SK-N-SH (cell line): ENCODE measurements at regions of chr17 and their contacts with region 1.

Region 1: GRCh38 chr17:76384222-76384986 is at the start of gene SPHK1:
- DNase-seq: peak; percentile 91
- H3K4me3 ChIP-seq: peak within 1 kb of the TSS; percentile 53 to 78
- H3K27ac ChIP-seq: peak within 1 kb of the TSS in 1 of 2 experiments; percentile 80; a peak in 2 of 4 replicates
- H3K4me1 ChIP-seq: peaks cover 0 to 40% of the 10 kb centered on the region in 2 experiments; a peak in 1 of 4 replicates
- H3K27me3 ChIP-seq: no peaks in the 10 kb centered on the region
- CTCF ChIP-seq: no peak
- EP300 ChIP-seq: no peak
- RAD21 ChIP-seq: no peak
- polyA plus RNA-seq, gene SPHK1: 7.7 and 12.3 TPM in 2 replicates

Region 2: DNA sequence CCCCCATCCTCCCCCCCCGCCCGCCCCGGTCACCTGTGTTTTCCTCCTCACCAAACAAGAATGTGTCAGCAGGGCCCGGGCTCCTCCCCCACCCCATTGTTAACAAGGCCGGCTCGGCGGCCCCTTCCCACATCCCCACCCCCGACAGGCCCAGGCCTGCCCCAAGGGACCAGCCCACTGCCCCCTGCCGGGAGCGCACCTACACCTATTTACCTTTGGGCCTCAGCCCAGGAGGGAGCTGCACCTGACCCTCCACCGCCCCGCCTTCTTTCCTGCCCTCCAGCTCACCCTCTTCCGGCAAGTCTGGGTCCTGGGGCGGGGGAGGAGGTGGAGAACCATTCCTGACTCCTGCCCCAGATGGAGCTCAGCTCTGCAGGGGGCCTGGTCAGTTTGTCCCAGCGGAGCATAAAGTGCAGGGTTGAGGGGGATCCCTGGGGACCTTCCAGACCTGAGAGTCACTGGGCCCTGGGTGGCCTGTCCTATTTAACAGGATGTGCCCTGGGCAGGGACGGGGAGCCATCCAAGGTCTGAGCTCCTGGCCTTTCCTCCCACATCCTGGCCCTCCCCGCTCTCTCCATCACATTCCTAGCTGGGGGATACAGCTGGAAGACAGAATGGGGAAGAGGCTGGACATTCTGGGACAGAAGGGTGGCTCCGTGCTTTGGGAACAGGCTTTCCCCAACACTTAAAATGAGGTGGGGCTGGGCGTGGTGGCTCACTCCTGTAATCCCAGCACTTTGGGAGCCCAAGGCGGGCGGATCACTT is 251.6 kb before region 1 on chr17:
- CTCF ChIA-PET with region 1: no interaction called
- POLR2A ChIA-PET with region 1: no interaction called
- DNase-seq: no peak
- H3K4me3 ChIP-seq: no peak overlapping the region
- H3K27ac ChIP-seq: no peak overlapping the region
- H3K4me1 ChIP-seq: no peaks in the 10 kb centered on the region
- H3K27me3 ChIP-seq: no peaks in the 10 kb centered on the region
- CTCF ChIP-seq: no peak
- EP300 ChIP-seq: no peak
- RAD21 ChIP-seq: no peak

Region 3: DNA sequence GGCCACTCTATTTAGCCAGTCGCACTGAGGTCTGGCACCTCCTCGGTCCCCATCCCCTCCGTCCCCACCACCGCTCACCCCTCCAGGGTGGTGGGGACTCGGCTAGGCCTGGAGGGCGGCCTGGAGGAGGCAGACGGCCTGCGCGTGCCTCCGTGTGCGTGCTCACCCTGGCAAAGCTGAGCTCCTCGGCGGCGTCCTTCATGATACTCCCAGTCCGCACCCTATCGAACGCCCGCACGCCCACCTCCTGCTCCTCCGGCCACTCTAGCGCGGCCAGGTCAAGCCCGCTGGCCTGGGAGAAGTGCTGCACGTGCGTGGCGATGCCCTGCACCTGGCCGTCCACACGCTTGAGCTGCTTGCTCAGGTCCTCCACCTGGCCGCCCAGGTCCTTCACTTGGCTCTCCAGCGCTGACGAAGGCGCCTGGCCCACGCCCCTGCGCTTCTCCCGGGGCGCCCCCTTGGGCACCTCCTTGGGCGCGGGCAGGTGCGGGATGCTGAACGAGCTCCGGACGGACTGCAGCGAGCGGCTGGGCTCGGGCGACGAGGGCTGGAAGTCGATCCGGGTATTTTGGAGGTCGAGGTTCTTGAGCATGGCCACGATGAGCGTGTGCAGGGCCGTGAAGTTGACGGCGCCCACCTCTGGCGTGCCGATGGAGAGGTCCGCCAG is 77.0 kb before region 1 on chr17:
- CTCF ChIA-PET with region 1: interaction called, 303 read pairs
- POLR2A ChIA-PET with region 1: interaction called, 4 read pairs
- DNase-seq: no peak
- H3K4me3 ChIP-seq: no peak overlapping the region
- H3K27ac ChIP-seq: no peak overlapping the region
- H3K4me1 ChIP-seq: no peaks in the 10 kb centered on the region
- H3K27me3 ChIP-seq: no peaks in the 10 kb centered on the region
- CTCF ChIP-seq: no peak
- EP300 ChIP-seq: no peak
- RAD21 ChIP-seq: no peak

Region 4: DNA sequence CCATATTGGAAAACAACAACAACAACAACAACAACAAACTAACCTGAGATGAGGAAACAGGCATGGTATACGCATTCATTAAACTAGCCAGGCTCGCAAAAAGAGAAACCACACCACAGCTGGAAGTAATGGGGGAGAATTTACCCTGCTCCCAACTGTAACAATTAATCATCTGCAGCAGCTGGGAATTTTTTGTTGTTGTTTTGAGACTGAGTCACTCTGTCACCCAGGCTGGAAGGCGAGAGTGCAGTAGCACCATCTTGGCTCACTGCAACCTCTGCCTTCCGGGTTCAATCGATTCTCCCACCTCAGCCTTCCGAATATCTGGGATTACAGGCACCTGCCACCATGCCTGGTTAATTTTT is 47.0 kb before region 1 on chr17:
- CTCF ChIA-PET with region 1: interaction called, 30 read pairs
- POLR2A ChIA-PET with region 1: no interaction called
- DNase-seq: no peak
- H3K4me3 ChIP-seq: no peak overlapping the region
- H3K27ac ChIP-seq: no peak overlapping the region
- H3K4me1 ChIP-seq: peaks cover 0 to 11% of the 10 kb centered on the region in 2 experiments; a peak in 1 of 4 replicates
- H3K27me3 ChIP-seq: no peaks in the 10 kb centered on the region
- CTCF ChIP-seq: no peak
- EP300 ChIP-seq: no peak
- RAD21 ChIP-seq: no peak

Region 5: DNA sequence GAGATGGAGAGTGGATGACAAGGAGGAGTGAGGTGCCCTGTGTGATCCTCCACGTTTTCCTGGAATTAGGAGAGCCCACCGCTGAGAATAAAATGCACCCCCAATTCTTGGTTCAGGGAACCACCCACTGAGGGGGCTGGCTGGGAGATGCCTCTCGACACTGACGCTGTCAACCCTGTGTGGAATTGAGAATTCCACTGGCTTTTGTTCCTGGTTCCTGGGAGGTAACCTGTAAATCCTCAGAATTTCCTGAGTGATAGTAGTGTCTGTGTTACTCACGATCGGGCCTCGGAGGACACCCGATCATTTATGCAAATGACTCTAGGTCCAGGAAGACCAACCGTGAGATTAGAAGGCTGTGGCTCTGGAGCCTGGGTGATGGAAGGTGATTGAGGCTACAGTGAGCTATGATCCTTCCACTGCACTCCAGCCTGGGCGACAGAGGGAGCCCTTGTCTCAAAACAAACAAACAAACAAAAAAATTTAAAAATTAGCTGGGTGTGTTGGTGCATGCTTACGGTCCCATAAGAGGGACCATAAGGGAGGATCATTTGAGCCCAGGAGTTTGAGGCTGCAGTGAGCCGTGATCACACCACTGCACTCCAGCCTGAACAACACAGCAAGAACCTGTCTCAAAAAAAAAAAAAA is 19.0 kb before region 1 on chr17:
- CTCF ChIA-PET with region 1: interaction called, 114 read pairs
- POLR2A ChIA-PET with region 1: no interaction called
- DNase-seq: no peak
- H3K4me3 ChIP-seq: no peak overlapping the region
- H3K27ac ChIP-seq: no peak overlapping the region
- H3K4me1 ChIP-seq: peaks cover 3 to 23% of the 10 kb centered on the region in 2 experiments; a peak in 2 of 4 replicates
- H3K27me3 ChIP-seq: no peaks in the 10 kb centered on the region
- CTCF ChIP-seq: no peak
- EP300 ChIP-seq: no peak
- RAD21 ChIP-seq: no peak

Region 6: GRCh38 chr17:76414334-76415295 is 30.2 kb after region 1 on chr17:
- CTCF ChIA-PET with region 1: interaction called, 186 read pairs
- POLR2A ChIA-PET with region 1: no interaction called
- DNase-seq: peak; percentile 94
- H3K4me3 ChIP-seq: no peak overlapping the region
- H3K27ac ChIP-seq: peak overlapping the region in 1 of 2 experiments; percentile 77; a peak in 2 of 4 replicates
- H3K4me1 ChIP-seq: peaks cover 0 to 44% of the 10 kb centered on the region in 2 experiments; a peak in 2 of 4 replicates
- H3K27me3 ChIP-seq: no peaks in the 10 kb centered on the region
- CTCF ChIP-seq: no peak
- EP300 ChIP-seq: peak in 1 of 2 experiments; percentile 78; a peak in 1 of 4 replicates
- RAD21 ChIP-seq: peak; percentile 24; the same call in 1 of the 2 replicates

Region 7: GRCh38 chr17:76515274-76515949 is 131.0 kb after region 1 on chr17:
- CTCF ChIA-PET with region 1: interaction called, 12 read pairs
- POLR2A ChIA-PET with region 1: no interaction called
- DNase-seq: no peak
- H3K4me3 ChIP-seq: no peak overlapping the region
- H3K27ac ChIP-seq: no peak overlapping the region
- H3K4me1 ChIP-seq: peaks cover 0 to 6% of the 10 kb centered on the region in 2 experiments; a peak in 1 of 4 replicates
- H3K27me3 ChIP-seq: peaks cover 27% of the 10 kb centered on the region; the same call in 1 of the 2 replicates
- CTCF ChIP-seq: no peak
- EP300 ChIP-seq: no peak
- RAD21 ChIP-seq: no peak